ENCODE measurements at regions of chr4 and their contacts with region 1.

Region 1: GRCh38 chr4:143517774-143518173 is 4.3 kb downstream of the SMARCA5 start:
- DNase-seq: no peak
- H3K4me3 ChIP-seq: no peak overlapping the region
- CTCF ChIP-seq: no peak

Region 2: DNA sequence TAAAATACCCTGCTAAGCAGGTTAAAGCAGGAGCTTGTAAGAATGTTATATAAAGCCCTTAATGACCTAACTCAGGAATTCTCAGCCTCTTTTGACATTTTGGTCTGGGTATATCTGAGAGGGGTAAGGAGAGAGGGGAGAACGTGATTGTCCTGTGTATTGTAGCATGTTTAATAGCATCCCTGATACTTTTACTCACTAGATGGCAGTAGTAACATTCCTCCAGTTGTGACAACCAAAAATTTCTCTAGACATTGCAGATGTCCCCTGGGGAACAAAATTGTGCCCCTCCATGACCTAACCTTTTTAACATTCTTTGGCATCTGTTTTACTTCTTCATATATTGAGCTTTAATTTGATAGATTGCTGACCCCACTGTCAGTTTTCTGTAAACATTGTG is 13.6 kb after region 1 on chr4:
- CTCF ChIA-PET with region 1: interaction called, 14 read pairs
- POLR2A ChIA-PET with region 1: interaction called, 3 read pairs
- DNase-seq: no peak
- H3K4me3 ChIP-seq: no peak overlapping the region
- CTCF ChIP-seq: peak; percentile 22